ENCODE measurements at regions of chr2 and their contacts with region 1.

Region 1: DNA sequence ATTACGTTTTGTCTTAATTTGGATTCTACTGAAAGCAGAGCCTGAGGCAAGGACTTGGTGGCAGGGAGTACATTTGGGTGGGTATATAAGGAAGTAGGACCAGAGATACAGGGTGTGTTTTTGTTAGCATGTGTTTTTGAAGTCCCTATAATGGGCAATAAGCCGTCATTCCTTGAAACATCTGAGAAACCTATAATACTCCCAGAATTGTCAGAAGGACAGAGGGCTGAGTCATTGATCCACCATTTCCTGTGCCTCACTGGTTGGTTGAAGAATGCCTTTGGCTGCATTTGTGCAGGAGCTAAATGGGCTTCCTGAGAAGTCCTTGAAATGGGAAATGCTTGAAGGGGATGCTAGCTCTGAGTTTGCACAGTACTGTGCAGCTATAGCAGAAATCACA is 281.8 kb upstream of the ZEB2 start:
- DNase-seq: peak; percentile 77
- H3K4me3 ChIP-seq: no peak overlapping the region
- H3K27ac ChIP-seq: peak overlapping the region; percentile 16
- H3K4me1 ChIP-seq: peaks cover 10% of the 10 kb centered on the region
- H3K27me3 ChIP-seq: no peaks in the 10 kb centered on the region
- CTCF ChIP-seq: no peak
- POLR2A ChIP-seq: no peak

Region 2: GRCh38 chr2:144876013-144876412 is 74.2 kb after region 1 on chr2:
- CTCF ChIA-PET with region 1: no interaction called
- POLR2A ChIA-PET with region 1: no interaction called
- dilution Hi-C with region 1: no loop called
- intact Hi-C with region 1: no loop called
- DNase-seq: no peak
- H3K4me3 ChIP-seq: no peak overlapping the region
- H3K27ac ChIP-seq: no peak overlapping the region
- H3K4me1 ChIP-seq: no peaks in the 10 kb centered on the region
- H3K27me3 ChIP-seq: no peaks in the 10 kb centered on the region
- CTCF ChIP-seq: no peak
- POLR2A ChIP-seq: no peak

Region 3: DNA sequence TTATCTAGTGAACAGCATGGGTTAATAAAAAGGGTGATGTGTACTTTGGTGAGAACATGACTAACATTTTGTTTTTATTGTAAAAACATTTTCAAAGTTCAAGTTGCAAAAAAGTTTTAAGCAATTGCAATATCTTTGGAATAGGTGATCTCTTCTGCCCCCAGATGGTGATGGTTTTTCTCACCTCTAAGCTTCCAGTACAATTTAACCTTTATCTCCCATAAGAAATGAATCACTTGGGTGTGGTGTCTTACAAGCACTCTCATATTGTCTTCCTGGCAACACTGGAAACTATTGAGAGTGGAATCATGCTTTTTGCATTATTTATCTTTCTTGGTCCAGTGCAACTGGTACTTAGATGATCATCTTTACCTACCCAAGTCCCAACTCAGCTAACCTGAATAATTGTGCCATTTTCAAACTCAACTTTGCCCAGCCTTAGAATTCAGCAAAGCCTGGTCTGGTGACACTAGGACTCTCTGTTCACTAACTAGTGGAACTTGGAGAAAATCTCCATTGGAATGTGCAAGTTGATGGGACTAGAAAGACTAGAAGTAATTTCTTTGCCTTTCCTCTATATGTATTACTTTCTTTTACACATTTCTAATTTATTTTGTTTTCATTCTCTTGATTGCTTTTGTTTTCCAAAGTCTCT is 682.8 kb after region 1 on chr2:
- CTCF ChIA-PET with region 1: no interaction called
- POLR2A ChIA-PET with region 1: no interaction called
- dilution Hi-C with region 1: no loop called
- intact Hi-C with region 1: loop called (anchors 10 kb)
- DNase-seq: peak; percentile 50
- H3K4me3 ChIP-seq: no peak overlapping the region
- H3K27ac ChIP-seq: no peak overlapping the region
- H3K4me1 ChIP-seq: no peaks in the 10 kb centered on the region
- H3K27me3 ChIP-seq: no peaks in the 10 kb centered on the region
- CTCF ChIP-seq: peak in 1 of 2 donors; percentile 5
- POLR2A ChIP-seq: no peak

Measured in endothelial cell of umbilical vein (primary cell).